ENCODE measurements at regions of chr14 and their contacts with region 1.

Region 1: GRCh38 chr14:23068476-23069412 is 11.4 kb upstream of the CDH24 start:
- DNase-seq: peak; percentile 94 to 95
- ATAC-seq: peak; percentile 72 to 86
- H3K4me3 ChIP-seq: no peak overlapping the region
- H3K27ac ChIP-seq: peak overlapping the region in 1 of 2 experiments; percentile 34; a peak in 2 of 6 replicates
- H3K4me1 ChIP-seq: peaks cover 32% of the 10 kb centered on the region
- CTCF ChIP-seq: peak; percentile 99
- EP300 ChIP-seq: no peak
- POLR2A ChIP-seq: no peak
- RAD21 ChIP-seq: peak; percentile 79

Region 2: GRCh38 chr14:23006544-23007419 is 62.0 kb before region 1 on chr14:
- CTCF ChIA-PET with region 1: interaction called, 1,206 read pairs
- POLR2A ChIA-PET with region 1: interaction called, 7 read pairs
- DNase-seq: peak; percentile 97 to 99
- ATAC-seq: peak; percentile 96 to 98
- H3K4me3 ChIP-seq: peak overlapping the region; percentile 60
- H3K27ac ChIP-seq: peak overlapping the region; percentile 93
- H3K4me1 ChIP-seq: peaks cover 27% of the 10 kb centered on the region
- CTCF ChIP-seq: peak; percentile 35; the same call in 2 of the 3 replicates
- EP300 ChIP-seq: no peak
- POLR2A ChIP-seq: peak; percentile 81
- RAD21 ChIP-seq: 0 out of 5 replicates have a peak, but pooled peaks of 1 of the 2 experiments have one; percentile 11

Region 3: GRCh38 chr14:23085458-23085857 is 16.7 kb after region 1 on chr14:
- CTCF ChIA-PET with region 1: interaction called, 141 read pairs
- POLR2A ChIA-PET with region 1: interaction called, 3 read pairs
- DNase-seq: no peak
- ATAC-seq: no peak
- H3K4me3 ChIP-seq: no peak overlapping the region
- H3K27ac ChIP-seq: no peak overlapping the region
- H3K4me1 ChIP-seq: peaks cover 4% of the 10 kb centered on the region; the same call in 2 of the 3 replicates
- CTCF ChIP-seq: no peak
- EP300 ChIP-seq: no peak
- POLR2A ChIP-seq: no peak
- RAD21 ChIP-seq: no peak

Region 4: DNA sequence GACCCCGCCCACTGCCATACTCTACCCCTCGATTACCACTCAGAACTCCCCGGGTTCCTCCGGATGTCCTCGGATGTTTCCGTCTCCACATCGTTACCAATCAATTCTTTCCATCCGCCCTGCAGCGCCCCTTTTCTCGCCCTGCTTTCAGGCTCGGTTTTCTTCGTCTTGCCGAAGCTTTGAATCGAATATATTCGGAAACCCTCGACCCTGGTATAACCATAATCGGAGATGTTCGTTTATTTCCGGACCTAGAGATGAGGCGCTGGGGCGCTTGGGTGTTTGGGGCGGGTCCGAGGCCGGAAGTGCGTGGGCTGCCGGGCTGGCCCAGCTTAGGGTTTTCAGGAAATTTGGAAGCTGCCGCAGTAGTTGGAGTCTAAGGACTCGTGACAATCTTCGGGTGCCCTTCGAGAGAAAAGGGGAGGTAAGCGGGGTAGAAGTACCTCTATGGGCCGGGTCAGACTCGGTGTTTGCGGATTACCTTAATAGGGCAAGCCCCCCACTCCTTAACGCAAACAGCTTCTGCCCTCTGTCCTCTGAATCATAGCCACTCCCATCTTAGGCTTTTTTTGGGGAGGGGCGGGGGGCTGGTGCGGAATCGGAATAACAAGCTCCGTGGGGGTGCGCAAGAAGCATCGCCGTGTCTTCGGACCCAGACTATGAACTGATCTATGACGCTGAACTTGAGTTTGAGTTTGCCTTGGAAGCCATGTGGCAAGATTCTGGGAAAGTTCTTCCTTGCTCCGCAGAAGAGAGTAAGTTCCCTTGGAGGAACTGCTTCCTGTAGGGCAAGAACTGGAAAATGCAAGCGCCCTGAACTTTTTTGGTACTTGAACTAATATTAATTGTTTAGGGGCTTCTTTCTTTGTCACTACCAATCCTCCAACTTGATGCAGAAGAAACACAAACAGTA is 26.7 kb after region 1 on chr14 and contains the start of gene C14orf119:
- CTCF ChIA-PET with region 1: interaction called, 44 read pairs
- POLR2A ChIA-PET with region 1: interaction called, 36 read pairs
- DNase-seq: peak; percentile 98
- ATAC-seq: peak; percentile 90 to 93
- H3K4me3 ChIP-seq: peak within 1 kb of the TSS; percentile 62
- H3K27ac ChIP-seq: peak within 1 kb of the TSS; percentile 89 to 97
- H3K4me1 ChIP-seq: peaks cover 23% of the 10 kb centered on the region
- CTCF ChIP-seq: no peak
- EP300 ChIP-seq: no peak
- POLR2A ChIP-seq: peak; percentile 81
- RAD21 ChIP-seq: no peak
- polyA plus RNA-seq, gene C14orf119: 82.5 and 107 TPM in 2 replicates

Region 5: DNA sequence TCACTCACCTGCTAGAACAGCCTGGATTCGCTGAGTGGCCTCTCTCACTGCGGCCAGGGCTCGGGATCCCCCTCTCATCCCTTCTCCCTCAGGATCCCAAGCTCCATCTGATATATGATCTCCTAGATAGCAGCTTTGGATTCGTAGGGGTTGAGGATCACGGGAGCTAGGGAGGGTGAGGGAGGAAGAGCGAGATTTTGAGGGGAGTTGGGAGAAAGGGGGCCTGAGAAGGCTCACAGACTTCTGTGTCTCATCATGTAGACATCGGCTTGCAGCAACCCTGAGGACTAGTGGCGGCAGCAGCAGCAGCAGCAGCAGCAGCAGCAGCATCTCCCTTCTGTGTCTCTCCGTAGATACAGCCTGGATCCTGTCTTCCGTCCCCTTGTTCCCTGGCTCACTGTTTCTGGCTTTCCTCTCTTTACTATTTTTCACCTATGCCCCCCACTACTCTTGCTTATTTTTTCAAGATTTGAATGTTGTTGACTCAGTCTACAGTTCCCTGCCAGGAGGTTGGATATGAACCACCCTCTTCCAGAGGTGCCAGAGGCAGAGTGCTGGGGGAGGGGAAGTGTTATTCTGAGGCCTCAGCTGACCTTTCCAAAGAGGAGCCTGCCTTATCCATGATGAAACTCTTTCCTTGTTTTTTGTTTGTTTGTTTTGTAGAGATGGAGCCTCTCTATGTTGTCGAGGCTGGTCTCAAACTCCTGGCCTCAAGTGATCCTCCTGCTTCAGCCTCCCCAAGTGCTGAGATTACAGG is 36.0 kb after region 1 on chr14 and contains the start of gene CIROP:
- CTCF ChIA-PET with region 1: interaction called, 118 read pairs
- POLR2A ChIA-PET with region 1: no interaction called
- DNase-seq: no peak
- ATAC-seq: peak in 1 of 2 experiments; percentile 5; a peak in 1 of 6 replicates
- H3K4me3 ChIP-seq: no peak within 1 kb of the TSS
- H3K27ac ChIP-seq: no peak within 1 kb of the TSS
- H3K4me1 ChIP-seq: 0 out of 3 replicates have a peak, but pooled peaks cover 4% of the 10 kb centered on the region
- CTCF ChIP-seq: no peak
- EP300 ChIP-seq: no peak
- POLR2A ChIP-seq: no peak
- RAD21 ChIP-seq: no peak
- polyA plus RNA-seq, gene CIROP: 0.03 TPM in 1 of 2 replicates, not detected in the other

Region 6: GRCh38 chr14:23114669-23115491 is 46.1 kb after region 1 on chr14:
- CTCF ChIA-PET with region 1: interaction called, 118 read pairs
- POLR2A ChIA-PET with region 1: no interaction called
- DNase-seq: peak; percentile 79 to 80
- ATAC-seq: peak; percentile 80 to 88
- H3K4me3 ChIP-seq: no peak overlapping the region
- H3K27ac ChIP-seq: peak overlapping the region; percentile 47 to 75; a peak in 5 of 6 replicates
- H3K4me1 ChIP-seq: peaks cover 22% of the 10 kb centered on the region
- CTCF ChIP-seq: no peak
- EP300 ChIP-seq: no peak
- POLR2A ChIP-seq: no peak
- RAD21 ChIP-seq: no peak

Region 7: DNA sequence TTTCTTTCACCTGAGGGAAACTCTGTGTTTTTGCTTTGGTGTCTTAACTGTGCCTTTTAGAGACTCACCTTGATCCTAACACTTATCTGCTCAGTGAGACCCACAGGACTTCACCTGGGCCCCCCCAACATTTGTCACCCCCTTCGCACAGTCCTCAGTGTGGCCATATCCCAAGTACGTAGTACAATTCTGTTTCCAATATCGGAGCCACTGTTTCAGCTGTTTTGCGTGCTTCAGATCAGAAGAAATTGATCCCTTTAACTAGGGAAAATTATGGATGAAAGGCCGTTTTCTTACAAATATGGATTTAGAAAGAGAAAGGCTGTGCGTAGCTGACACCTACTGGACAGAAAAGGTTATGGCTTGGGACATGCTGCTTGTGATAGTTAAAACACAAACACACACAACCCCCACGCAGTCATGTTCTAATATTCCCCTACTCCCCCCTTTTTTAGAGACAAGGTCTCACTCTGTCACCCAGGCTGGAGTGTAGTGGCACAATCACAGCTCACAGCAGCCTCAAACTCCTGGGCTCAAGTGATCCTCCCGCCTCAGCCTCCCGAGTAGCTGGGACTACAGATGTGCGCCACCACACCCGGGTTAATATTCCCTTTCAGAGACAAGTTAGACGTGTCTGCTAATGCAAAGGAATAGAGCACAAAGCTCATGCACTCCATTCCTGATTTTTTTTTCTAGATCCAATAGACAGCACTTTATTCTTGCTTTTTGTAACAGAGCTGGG is 118.3 kb after region 1 on chr14:
- CTCF ChIA-PET with region 1: interaction called, 22 read pairs
- POLR2A ChIA-PET with region 1: no interaction called
- DNase-seq: peak; percentile 64 to 74
- ATAC-seq: peak; percentile 63 to 83; a peak in 5 of 6 replicates
- H3K4me3 ChIP-seq: no peak overlapping the region
- H3K27ac ChIP-seq: no peak overlapping the region
- H3K4me1 ChIP-seq: 0 out of 3 replicates have a peak, but pooled peaks cover 3% of the 10 kb centered on the region
- CTCF ChIP-seq: peak; percentile 93
- EP300 ChIP-seq: no peak
- POLR2A ChIP-seq: no peak
- RAD21 ChIP-seq: peak; percentile 92 to 96

Region 8: GRCh38 chr14:23202001-23202400 is 133.3 kb after region 1 on chr14:
- CTCF ChIA-PET with region 1: no interaction called
- POLR2A ChIA-PET with region 1: no interaction called
- DNase-seq: no peak
- ATAC-seq: no peak
- H3K4me3 ChIP-seq: no peak overlapping the region
- H3K27ac ChIP-seq: no peak overlapping the region
- H3K4me1 ChIP-seq: no peaks in the 10 kb centered on the region
- CTCF ChIP-seq: no peak
- EP300 ChIP-seq: no peak
- POLR2A ChIP-seq: no peak
- RAD21 ChIP-seq: no peak